ENCODE measurements at regions of chr1 and their contacts with region 1.

Region 1: DNA sequence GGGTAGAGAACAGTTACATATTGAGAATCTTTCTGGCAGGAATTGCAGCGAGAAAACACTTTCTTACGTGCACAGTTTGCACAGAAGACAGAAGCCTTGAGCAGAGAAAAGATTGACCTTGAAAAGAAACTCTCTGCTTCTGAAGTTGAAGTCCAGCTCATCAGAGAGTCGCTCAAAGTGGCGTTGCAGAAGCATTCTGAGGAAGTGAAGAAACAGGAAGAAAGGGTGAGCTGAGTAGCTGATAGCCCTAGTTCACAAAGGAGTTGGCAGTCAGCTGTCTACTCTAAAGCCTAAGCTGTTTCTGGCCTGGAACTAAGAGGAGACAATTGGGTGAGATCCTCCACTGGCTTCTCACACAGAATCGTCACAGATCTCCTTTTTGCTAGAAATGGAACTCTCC is 20.3 kb upstream of the SH3BGRL3 start:
- DNase-seq: no peak
- ATAC-seq: no peak
- H3K4me3 ChIP-seq: no peak overlapping the region
- H3K27ac ChIP-seq: peak overlapping the region; percentile 74
- H3K4me1 ChIP-seq: peaks cover 27% of the 10 kb centered on the region
- H3K27me3 ChIP-seq: no peaks in the 10 kb centered on the region
- CTCF ChIP-seq: no peak

Region 2: DNA sequence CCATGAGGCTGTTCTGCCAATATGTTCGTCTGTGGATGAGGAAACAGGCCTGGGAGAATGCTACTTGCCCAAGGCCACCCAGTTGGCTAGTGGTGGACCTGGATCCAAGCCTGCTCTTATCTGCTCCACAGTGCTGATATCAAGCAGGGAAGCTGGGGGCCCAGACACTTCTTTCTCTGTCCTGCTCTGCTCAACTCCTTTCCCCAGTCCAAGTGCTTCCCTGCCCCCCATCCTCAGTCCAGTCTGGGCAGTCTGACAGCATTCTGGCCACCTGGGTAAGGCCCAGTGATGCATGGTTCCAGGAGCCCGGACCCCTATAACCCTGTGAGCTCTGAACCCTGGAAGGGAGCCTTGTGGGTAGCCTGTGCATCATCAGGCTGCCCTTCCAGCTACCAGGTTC is 379.9 kb before region 1 on chr1:
- intact Hi-C with region 1: no loop called
- DNase-seq: peak in 1 of 2 donors; percentile 19
- ATAC-seq: no peak
- H3K4me3 ChIP-seq: no peak overlapping the region
- H3K27ac ChIP-seq: no peak overlapping the region
- H3K4me1 ChIP-seq: peaks cover 6% of the 10 kb centered on the region
- H3K27me3 ChIP-seq: no peaks in the 10 kb centered on the region
- CTCF ChIP-seq: no peak

Region 3: GRCh38 chr1:26035959-26036755 is 223.4 kb before region 1 on chr1:
- intact Hi-C with region 1: no loop called
- DNase-seq: peak; percentile 87 to 96
- ATAC-seq: peak; percentile 80 to 88 (median 82)
- H3K4me3 ChIP-seq: peak overlapping the region; percentile 80
- H3K27ac ChIP-seq: peak overlapping the region; percentile 94
- H3K4me1 ChIP-seq: peaks cover 35% of the 10 kb centered on the region
- H3K27me3 ChIP-seq: no peaks in the 10 kb centered on the region
- CTCF ChIP-seq: peak; percentile 100

Region 4: DNA sequence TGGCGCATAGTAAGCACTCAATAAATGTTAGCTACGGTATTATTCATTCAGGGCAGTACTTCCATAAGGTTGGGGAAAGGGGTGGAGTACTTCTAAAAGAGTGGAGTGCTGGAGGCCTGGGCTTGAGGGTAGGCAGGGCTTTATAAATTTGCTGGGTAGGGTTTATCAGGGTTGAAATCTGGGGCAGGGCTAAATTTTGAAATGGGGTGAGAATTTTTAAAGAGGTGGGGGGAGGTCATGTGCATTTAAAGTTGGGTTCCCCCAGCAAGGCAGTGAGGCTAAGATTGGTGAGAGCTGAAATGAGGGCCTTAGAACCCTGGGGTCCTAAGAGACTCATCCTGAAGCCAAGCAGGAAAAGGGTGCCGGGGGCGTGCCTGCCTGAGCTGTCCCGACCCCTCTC is 59.2 kb before region 1 on chr1:
- intact Hi-C with region 1: loop called in 1 of 2 experiments (anchors 2 kb)
- DNase-seq: no peak
- ATAC-seq: no peak
- H3K4me3 ChIP-seq: no peak overlapping the region
- H3K27ac ChIP-seq: no peak overlapping the region
- H3K4me1 ChIP-seq: no peaks in the 10 kb centered on the region
- H3K27me3 ChIP-seq: no peaks in the 10 kb centered on the region
- CTCF ChIP-seq: no peak

Region 5: GRCh38 chr1:26431979-26432695 is 172.6 kb after region 1 on chr1 and contains the start of gene DHDDS:
- intact Hi-C with region 1: no loop called
- DNase-seq: peak; percentile 99
- ATAC-seq: peak; percentile 99 to 100 (median 100)
- H3K4me3 ChIP-seq: peak within 1 kb of the TSS; percentile 94
- H3K27ac ChIP-seq: peak within 1 kb of the TSS; percentile 90
- H3K4me1 ChIP-seq: peaks cover 11% of the 10 kb centered on the region
- H3K27me3 ChIP-seq: no peaks in the 10 kb centered on the region
- CTCF ChIP-seq: no peak
- total RNA-seq, gene DHDDS: 14.1 to 25.8 (median 21.4) TPM

Measured in psoas muscle (tissue), 8 donors.